Activated CD4-positive, alpha-beta T cell treated with anti-CD3 and anti-CD28 coated beads, Interleukin-2, amount 10 ng/mL, durations not matched to agents 24 days and 14 days (primary cell): ENCODE measurements at regions of chr22 and their contacts with region 1.

Region 1: DNA sequence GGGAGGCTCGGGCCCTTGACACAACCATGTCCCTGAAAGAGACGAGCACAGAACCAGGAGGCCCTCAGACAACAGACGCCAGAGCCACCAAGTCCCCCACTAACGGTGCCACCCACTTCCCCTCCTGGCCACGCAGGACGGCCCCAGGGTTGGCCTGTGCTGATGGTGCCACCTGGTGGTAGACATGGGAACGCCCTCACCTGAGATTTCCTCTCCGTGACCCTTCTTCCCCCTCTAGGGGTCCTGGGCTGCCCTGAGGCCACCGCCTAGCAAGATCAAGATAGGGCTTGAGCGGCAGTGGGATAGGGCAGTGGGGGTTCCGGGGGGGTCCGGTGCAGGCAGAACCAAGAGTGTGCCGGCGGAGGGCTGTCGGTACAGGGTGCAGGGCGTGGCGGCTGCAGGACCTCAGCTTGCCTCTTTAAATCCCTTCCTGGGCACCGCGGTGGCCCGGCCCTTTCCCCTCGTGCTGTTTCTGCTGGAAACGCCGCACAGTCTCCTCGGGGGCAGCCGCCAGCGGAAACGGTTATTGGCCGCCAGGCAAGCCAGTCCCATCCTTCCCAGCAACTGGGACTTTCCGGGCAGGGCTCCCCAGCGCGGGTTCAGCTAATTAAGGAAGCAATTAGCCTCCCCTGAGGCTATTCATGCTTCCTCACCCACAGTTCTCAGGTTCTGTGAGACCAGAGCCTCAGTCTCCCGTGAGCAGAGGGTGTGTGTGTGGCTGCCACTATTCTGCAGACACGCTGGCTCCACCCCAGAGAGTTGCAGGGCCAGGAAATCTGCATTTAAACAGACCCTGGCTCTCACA is 5.5 kb upstream of the NFAM1 start:
- DNase-seq: peak; percentile 96
- H3K4me3 Mint-ChIP-seq: peak overlapping the region; percentile 85
- H3K27ac Mint-ChIP-seq: peak overlapping the region; percentile 80
- H3K4me1 Mint-ChIP-seq: peaks cover 30% of the 10 kb centered on the region
- H3K27me3 Mint-ChIP-seq: peaks cover 9% of the 10 kb centered on the region

Region 2: DNA sequence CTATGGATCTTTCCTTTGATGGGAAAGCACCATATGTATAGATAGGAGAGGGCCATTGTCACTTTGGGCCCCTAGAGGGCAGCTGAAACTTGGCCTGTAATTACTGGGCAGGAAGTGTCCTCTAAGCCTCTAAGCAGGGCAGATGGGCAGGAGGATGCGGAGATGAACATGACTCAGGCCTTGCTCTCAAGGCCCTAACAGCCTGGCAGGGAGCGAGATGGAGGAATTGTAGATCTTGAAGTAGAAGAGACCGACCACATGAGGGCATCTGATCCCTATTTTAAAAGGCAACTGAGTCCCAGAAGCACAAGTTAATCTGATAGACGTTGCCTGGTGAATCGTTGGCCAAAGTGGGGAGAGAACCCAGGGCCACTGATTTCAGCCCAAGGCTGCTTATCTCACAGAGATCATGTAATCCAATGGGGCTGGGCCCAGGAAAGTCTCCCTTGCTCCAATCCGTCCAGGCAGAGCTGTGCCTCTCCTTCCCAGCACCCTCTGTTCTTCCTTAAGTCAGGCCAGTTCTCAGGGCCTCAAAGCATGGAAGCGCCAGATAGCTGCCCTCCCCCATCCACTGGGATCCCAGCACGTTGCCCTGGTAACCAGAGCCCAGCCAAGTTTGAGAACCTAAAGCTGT is 471.0 kb before region 1 on chr22:
- intact Hi-C with region 1: loop called (anchors 1 kb)
- DNase-seq: peak; percentile 85
- H3K4me3 Mint-ChIP-seq: no peak overlapping the region
- H3K27ac Mint-ChIP-seq: no peak overlapping the region
- H3K4me1 Mint-ChIP-seq: peaks cover 6% of the 10 kb centered on the region
- H3K27me3 Mint-ChIP-seq: no peaks in the 10 kb centered on the region

Region 3: DNA sequence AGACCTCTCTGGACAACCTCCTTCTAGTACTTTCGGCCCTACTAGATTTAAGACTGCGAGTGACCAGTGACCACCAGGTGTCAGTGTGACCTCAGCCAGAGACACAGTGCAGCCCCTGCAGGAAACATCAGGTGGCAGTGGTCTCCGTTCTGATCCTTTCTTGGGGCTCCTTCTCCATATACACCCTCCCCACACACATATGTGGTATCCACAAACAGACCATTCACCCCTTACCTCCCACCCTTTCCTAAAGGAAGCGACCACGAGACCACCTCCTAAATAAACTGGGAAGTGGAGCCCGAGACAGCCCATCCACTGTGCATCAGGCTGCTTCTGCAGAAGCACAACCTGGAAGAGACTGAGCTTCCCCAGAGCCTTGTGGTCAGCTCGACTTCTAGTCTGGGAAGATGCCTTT is 268.6 kb before region 1 on chr22:
- intact Hi-C with region 1: loop called (anchors 1 kb)
- DNase-seq: peak; percentile 89
- H3K4me3 Mint-ChIP-seq: no peak overlapping the region
- H3K27ac Mint-ChIP-seq: peak overlapping the region; percentile 29
- H3K4me1 Mint-ChIP-seq: peaks cover 10% of the 10 kb centered on the region
- H3K27me3 Mint-ChIP-seq: no peaks in the 10 kb centered on the region

Region 4: DNA sequence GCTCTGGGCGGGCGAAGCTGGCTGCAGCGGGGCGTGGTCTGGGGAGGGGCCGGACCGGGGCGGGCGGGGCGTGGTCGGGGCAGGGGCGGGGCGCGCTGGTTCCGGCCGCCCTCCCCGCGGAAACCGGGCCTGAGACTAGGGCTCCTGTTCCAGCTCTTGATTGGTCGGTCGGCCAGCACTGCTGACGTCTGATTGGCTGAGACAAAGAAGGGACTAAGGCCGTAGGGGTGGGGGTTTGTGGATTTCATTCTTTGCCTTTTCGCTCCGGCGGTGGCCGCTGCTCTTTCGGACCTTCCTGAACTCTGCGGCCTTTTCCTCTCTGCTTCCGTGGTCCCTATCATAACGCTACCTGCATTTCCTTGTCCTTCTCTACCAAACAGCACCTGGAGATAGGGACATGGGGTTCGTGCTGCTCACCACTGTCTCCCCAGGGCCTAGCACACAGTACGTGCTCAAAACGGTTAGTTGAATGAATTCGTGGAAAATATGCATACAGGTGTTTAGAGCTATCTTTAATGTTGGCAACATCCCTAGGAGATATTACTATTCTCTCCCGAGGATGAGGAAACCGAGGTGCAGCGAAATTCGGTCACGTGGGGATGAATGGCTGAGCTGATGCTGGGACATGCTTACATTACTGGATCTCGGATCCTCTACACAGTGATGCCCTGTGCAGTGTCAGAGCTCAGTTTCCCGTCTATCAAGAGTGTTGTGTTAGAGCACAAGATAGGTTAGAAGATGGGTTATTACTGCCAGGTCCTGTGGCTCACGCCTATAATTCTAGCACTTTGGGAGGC is 68.2 kb before region 1 on chr22:
- intact Hi-C with region 1: loop called (anchors 5 kb)
- DNase-seq: peak; percentile 95
- H3K4me3 Mint-ChIP-seq: peak overlapping the region; percentile 84
- H3K27ac Mint-ChIP-seq: peak overlapping the region; percentile 55
- H3K4me1 Mint-ChIP-seq: peaks cover 16% of the 10 kb centered on the region
- H3K27me3 Mint-ChIP-seq: peaks cover 44% of the 10 kb centered on the region

Region 5: GRCh38 chr22:42385696-42386095 is 52.0 kb before region 1 on chr22:
- intact Hi-C with region 1: no loop called
- DNase-seq: no peak
- H3K4me3 Mint-ChIP-seq: no peak overlapping the region
- H3K27ac Mint-ChIP-seq: no peak overlapping the region
- H3K4me1 Mint-ChIP-seq: no peaks in the 10 kb centered on the region
- H3K27me3 Mint-ChIP-seq: no peaks in the 10 kb centered on the region